Posterior cingulate gyrus (tissue), 11 donors: ENCODE measurements at regions of chr3 and their contacts with region 1.

Region 1: GRCh38 chr3:125055913-125056745 is at the start of gene HEG1:
- DNase-seq: peak; percentile 58 to 95 (median 67)

Region 2: GRCh38 chr3:125141596-125142419 is 85.7 kb after region 1 on chr3:
- intact Hi-C with region 1: loop called (anchors 10 kb)
- DNase-seq: peak in 7 of 10 donors; percentile 23 to 91 (median 48)

Region 3: DNA sequence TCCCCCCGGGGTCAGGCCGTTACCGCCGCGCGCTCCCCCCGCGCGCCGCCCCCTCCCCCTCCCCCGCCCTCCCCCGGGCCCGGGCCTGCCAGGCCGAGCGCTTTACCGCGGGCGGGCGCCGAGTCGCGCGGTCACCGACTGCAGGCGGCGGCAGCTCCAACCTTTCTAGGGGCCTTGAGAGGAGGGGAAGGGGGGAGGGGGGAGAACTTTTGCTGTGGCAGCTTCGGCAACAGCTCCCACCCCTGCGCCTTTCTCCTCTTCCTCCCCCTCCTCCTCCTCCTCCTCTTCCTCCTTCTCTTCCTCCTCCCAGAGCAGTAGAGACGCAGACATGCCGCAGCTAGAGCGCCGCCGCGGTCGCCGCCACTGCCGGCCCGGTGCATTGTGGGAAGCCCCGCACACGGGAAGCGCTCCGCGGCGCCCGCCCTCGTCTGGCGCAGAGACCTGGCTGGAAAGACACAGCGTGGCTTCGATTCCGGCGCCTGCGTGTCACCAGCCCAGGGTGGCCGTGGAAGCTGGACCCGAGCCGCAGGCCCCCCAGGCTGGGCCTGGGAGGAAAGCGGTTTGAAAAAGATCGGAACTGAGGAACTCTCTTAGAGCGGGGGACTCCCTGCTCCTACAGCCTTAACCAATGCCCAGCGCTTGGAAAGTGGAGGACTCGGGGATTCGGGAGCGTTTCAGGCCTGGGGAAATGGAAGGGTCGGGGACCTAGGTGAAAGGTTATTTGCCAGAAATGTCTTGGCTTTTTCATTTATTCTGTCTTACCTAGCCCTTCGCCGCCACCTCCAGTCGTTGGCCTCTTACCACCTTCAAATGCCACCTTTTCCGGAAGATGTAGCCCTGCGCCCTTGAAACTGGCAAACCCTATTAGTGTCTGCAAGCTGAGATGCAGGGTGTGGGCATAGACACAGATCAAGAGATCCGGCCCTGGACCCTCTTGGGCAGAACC is 319.1 kb after region 1 on chr3 and contains the start of gene ZNF148:
- intact Hi-C with region 1: loop called (anchors 10 kb)
- DNase-seq: peak; percentile 87 to 99 (median 89)